Head of caudate nucleus (tissue), 42 donors: ENCODE measurements at regions of chr11 and their contacts with region 1.

Region 1: DNA sequence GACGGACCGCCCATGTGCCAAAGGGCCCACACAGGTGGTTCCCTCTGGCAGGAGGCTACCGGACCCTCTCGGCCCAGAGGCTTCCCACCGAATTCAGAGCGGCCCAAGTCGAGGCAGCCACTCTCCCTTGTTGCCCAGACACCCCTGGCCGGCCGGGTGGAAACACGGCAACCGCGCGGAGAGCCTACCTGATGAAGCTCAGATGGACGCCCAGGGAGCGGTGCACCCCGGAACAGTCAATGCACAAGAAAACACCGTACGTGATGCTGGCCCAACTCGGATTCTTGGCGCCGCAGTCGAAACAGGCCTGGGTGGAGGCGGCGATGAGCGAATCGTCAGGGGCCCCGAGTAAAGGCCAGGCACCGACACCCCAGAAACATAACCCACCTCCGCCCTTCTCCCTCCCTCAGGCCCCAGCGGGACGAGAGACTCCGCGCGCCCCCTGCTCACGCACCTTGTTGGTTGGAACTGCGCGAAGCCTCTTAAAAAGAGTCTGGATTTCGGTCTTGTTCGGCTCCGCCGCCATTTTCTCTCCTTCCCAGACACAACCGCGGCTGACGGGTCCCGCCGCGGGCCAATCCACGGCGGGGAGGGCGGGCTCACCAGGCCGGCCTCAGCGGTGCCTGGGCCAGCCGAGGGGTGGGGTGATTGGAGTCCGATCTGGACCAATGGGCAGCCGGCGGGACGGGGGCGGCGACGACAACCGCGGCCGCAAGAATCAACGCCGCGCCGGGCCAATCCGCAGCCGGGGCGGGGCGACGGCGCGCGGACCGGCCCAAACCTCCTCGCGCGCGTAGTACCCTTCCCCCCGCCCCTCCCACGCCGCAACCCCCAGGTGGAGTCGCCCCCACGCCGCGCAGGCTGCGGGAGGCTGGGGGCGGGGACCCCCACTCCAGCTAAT is at the start of gene ARFGAP2:
- DNase-seq: peak; percentile 95 to 99 (median 98)

Region 2: DNA sequence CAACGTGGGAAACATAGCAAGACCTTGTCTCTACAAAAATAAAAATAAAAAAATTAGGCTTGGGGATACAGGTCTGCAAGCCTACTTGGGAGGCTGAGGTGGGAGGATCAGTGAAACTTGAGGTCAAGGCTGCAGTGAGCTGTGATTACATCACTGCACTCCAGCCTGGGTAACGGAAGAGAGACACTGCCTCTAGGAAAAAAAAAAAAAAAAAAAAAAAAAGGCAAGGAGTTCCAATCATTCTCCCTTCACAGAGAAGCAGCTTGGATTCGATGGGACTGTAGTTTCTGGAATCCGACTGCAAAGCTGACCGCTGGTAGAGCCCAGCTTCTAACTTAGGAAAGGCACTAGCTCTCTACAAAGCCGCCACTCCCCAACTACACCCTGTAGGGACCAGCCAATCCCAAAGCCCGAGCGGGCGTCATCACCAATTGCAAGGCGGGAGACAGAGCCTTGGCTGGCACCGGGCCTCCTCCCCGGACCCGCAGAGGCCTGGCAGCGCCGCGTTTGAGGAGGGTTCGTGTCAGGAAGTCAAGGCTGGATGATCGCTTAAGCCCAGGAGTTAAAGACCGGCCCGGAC is 37.5 kb after region 1 on chr11:
- intact Hi-C with region 1: loop called (anchors 2 kb)
- DNase-seq: peak; percentile 91 to 99 (median 97)

Region 3: DNA sequence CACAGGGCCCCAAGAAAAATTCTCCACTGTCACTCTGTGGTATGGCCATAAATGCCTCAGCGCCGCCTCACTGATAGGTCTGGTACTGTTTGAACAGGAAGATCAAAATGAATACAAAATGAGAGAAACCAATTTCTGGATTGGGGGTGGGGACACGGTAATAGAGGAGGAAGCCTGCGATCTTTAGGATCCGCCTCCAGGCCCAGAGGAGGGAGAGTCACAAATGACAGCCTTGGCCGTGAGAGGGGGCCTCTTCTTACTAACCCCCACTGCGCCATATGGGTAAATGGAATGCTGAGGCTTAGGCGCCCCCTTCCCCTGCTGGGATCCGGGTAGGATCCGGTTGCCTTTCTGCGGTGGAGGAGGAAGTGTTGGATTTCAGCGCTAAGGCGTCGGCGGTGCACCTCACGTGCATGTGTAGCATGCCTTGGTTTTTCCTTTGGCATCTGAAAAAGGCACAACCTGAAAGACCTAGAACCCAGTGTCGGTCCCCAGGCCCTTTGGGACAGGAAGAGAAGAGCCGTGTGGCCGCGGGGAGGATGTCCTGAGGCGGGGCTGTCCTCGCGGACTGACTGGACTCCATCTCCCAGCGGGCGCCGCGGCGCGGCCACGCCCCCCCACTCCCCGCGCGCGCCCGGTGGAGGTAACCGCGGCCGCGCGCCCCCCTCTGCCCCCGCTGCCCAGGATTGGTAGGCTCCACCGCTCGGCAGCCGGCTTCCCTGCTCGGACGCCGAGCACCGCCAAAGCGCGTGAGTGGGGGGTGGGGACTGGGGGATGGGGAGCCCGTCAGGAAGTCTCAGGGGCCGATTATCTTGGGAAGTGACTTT is 92.6 kb after region 1 on chr11:
- intact Hi-C with region 1: loop called (anchors 2 kb)
- DNase-seq: peak; percentile 73 to 95 (median 88)

Region 4: DNA sequence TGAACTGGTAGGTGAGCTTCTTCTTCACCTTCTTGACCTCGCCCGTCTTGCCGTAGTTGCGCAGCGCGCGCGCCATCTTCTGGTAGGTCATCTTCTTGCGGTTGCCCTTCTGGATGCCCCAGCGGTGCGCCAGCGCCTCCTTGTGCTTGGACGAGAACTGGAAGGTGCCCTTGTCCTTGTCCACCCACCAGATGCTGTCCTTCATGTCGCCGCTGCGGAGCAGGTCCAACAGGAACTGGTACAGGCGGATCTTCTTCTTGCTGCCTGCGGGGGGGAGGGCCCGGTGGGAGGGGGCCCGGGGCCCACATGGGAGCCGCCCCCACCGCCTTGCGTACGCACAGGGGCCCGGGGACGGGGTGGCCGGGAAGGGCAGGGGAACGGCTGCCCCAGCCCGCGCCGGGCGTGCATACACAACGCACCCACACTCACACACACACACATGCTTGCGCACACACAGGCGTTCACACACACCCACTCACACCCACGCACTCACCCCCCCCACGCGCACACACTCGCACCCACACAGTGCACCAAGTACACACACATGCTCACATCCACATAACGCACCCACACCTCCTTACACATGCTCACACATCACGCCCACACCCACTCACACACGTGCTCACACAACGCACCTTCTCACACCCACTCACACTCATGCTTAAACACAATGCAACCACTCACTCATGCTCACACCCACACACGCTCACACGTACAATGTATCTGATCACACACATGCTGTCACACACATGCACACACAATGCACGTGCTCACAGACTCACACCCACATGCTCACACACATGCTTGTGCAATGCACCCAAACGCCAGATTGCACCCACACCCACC is 178.9 kb after region 1 on chr11:
- intact Hi-C with region 1: loop called (anchors 5 kb)
- DNase-seq: peak; percentile 89 to 97 (median 94)

Region 5: GRCh38 chr11:47433991-47434786 is 257.6 kb after region 1 on chr11:
- intact Hi-C with region 1: no loop called
- DNase-seq: peak in 7 of 42 donors; percentile 26 to 68 (median 36)